ENCODE measurements at regions of chr10 and their contacts with region 1.

Region 1: GRCh38 chr10:27360581-27361172 is 120.1 kb upstream of the ACBD5 start:
- DNase-seq: peak; percentile 68
- ATAC-seq: peak; percentile 98
- H3K4me3 ChIP-seq: no peak overlapping the region
- H3K27ac ChIP-seq: no peak overlapping the region
- H3K4me1 ChIP-seq: no peaks in the 10 kb centered on the region
- H3K27me3 ChIP-seq: no peaks in the 10 kb centered on the region
- CTCF ChIP-seq: peak; percentile 85 to 89 (median 87)
- POLR2A ChIP-seq: no peak
- RAD21 ChIP-seq: peak; percentile 94

Region 2: DNA sequence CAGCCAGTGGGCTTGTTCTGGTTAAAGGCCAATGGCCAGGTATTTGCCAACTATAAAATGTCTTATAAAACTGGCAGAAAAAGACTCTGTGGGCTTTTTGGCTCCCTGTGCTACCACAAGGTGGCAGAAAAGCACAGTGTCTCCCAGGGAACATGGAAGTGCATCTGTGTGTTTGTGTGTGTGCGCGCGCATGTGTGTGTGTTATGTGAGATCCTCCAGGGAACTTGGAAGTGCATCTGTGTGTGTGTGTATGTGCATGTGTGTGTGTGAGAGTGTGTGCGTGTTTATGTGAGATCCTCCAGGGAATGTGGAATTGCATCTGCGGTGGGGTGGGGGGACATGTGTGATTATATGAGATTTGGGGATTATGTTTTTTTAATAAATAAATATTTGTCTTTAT is 469.7 kb before region 1 on chr10:
- CTCF ChIA-PET with region 1: interaction called, 6 read pairs
- POLR2A ChIA-PET with region 1: no interaction called
- RAD21 ChIA-PET with region 1: no interaction called
- intact Hi-C with region 1: loop called (anchors 1 kb)
- DNase-seq: peak; percentile 62
- ATAC-seq: peak; percentile 87
- H3K4me3 ChIP-seq: no peak overlapping the region
- H3K27ac ChIP-seq: no peak overlapping the region
- H3K4me1 ChIP-seq: no peaks in the 10 kb centered on the region
- H3K27me3 ChIP-seq: no peaks in the 10 kb centered on the region
- CTCF ChIP-seq: peak; percentile 67 to 78 (median 73); a peak in 5 of 6 replicates
- POLR2A ChIP-seq: no peak
- RAD21 ChIP-seq: peak; percentile 77

Region 3: DNA sequence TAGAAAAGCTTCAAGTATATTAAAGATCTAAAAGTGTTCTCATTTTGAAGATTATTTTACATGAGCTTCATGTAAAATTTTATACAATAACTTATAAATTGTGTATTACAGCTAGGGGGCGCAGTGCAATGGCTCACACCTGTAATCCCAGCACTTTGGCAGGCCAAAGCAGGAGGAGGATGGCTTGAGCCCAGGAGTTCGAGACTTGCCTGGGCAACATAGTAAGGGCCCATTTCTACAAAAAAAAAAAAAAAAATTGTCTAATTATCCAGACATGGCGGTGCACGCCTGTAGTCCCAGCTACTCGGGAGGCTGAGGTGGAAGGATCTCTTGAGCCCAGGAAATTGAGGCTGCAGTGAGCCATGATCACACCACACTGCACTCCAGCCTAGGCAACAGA is 136.7 kb before region 1 on chr10:
- CTCF ChIA-PET with region 1: no interaction called
- POLR2A ChIA-PET with region 1: no interaction called
- RAD21 ChIA-PET with region 1: no interaction called
- intact Hi-C with region 1: loop called (anchors 5 kb)
- DNase-seq: no peak
- ATAC-seq: peak; percentile 94
- H3K4me3 ChIP-seq: no peak overlapping the region
- H3K27ac ChIP-seq: no peak overlapping the region
- H3K4me1 ChIP-seq: no peaks in the 10 kb centered on the region
- H3K27me3 ChIP-seq: no peaks in the 10 kb centered on the region
- CTCF ChIP-seq: peak; percentile 34 to 68 (median 65); a peak in 5 of 6 replicates
- POLR2A ChIP-seq: no peak
- RAD21 ChIP-seq: peak; percentile 44

Measured in HCT116 (cell line).